ENCODE measurements at regions of chr10 and their contacts with region 1.

Region 1: DNA sequence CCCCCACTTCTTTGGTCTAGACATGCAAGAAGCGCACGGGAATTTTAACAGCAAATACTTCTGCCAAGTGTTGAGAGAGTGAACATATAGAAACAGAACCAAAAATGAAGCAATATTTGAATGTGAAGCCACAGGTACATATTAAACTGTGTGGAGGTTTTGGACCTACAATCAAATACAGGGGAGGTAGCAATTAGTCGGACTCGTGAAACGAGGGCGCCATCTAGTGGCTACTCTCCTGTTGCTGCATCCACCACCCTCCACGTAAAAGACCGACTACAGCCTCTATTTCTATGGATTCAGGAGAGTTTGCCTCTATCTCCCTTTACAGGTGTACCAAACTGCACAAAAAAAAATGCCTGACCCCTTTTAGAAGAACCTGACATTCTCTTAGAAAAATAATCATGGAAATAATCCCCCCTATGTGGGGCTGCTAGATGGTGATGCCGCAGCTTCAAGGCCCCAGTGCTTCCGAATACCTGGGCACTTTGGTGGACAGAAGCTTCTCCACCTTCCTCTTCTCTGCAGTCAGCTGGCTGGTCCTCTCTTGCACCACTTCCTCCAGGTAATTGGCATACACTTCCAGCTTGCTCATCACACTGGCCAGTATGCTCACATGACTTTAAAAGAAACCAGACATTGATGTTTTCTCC is 31.7 kb downstream of the TECTB start:
- DNase-seq: peak; percentile 74 to 78
- H3K4me3 ChIP-seq: no peak overlapping the region
- H3K27ac ChIP-seq: no peak overlapping the region
- H3K4me1 ChIP-seq: no peaks in the 10 kb centered on the region
- H3K27me3 ChIP-seq: peaks cover 0 to 12% of the 10 kb centered on the region in 2 donors
- CTCF ChIP-seq: peak; percentile 81 to 84

Region 2: DNA sequence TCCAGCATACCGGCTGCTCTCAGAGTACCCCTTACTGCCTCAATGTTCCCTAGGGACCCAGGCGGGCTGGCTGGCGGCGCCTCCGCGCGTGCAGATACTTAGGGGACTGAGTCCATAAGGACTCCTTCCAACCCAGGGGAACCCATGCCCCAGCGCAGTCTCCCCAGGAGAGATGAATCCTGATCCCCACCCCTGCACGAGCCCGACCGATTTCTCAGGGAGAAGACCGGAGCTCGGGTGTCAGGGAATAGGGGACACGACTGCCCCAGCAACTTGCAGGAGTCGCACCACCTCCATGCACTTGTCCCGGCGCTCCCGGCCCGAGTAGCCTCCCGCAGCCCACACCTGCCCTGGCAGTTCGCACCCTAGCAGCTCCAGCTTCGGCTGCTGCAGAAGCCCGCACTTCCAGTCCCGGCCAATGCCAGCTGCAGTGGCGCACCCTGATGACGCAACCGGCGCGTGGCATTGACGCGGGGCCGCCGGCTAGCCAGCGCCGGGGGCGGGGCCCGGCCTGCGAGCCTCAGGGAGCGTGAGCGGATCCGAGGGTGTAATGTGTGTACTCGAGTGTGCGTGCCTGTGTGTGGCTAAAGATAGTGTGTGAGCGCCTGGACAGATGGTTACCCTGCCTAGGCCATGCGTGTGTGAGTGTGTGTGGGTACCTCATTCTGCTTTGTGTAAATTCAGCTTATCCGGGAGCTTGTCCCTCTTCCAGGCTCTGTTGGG is 131.5 kb before region 1 on chr10 and contains the start of gene GPAM:
- intact Hi-C with region 1: loop called (anchors 5 kb)
- DNase-seq: peak; percentile 93 to 97
- H3K4me3 ChIP-seq: peak within 1 kb of the TSS; percentile 89 to 93
- H3K27ac ChIP-seq: peak within 1 kb of the TSS; percentile 79
- H3K4me1 ChIP-seq: peaks cover 0 to 27% (median 10%) of the 10 kb centered on the region in 4 donors
- H3K27me3 ChIP-seq: no peaks in the 10 kb centered on the region
- CTCF ChIP-seq: peak in 1 of 2 experiments; percentile 32

Measured in tibial artery (tissue), 4 donors.